ENCODE measurements at regions of chr1 and their contacts with region 1.

Region 1: GRCh38 chr1:169546087-169546995 is 39.9 kb downstream of the F5 start:
- DNase-seq: no peak
- ATAC-seq: peak; percentile 81
- H3K4me3 ChIP-seq: no peak overlapping the region
- H3K27ac ChIP-seq: no peak overlapping the region
- H3K4me1 ChIP-seq: no peaks in the 10 kb centered on the region
- H3K27me3 ChIP-seq: no peaks in the 10 kb centered on the region

Region 2: GRCh38 chr1:169466259-169467230 is 79.8 kb before region 1 on chr1:
- intact Hi-C with region 1: loop called (anchors 1 to 5 kb)
- DNase-seq: no peak
- ATAC-seq: no peak
- H3K4me3 ChIP-seq: no peak overlapping the region
- H3K27ac ChIP-seq: no peak overlapping the region
- H3K4me1 ChIP-seq: no peaks in the 10 kb centered on the region
- H3K27me3 ChIP-seq: no peaks in the 10 kb centered on the region